CD8-positive, alpha-beta T cell (primary cell): ENCODE measurements at regions of chr1 and their contacts with region 1.

Region 1: DNA sequence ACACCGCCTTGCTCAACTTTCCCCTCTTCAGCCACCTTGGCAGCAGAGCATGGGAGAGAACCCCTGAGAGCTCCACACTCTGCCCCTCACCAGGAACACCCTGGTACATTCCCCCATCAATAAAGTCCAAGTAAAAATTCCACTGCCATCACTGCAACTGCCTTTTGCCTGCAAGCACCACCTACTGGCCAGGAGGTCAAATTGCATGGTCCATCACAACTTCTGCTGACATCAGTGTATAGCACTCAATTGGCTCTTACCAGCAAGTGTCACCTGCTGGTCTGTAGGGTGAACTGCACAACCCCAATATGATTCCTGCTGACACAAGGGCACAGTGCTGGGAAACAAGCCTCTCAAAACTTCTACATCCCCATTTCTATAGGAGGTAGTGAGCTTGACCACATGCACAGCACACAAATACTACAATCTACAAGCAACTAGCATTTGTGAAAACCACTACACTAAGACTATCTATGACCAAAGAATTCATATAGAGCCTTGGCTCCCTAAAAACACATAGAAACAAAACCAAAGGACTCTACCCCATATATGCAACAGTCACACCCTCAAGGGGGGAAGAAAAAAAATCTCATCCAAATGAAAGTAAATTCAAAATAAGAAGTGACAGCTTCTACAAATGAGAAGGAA is 69.2 kb downstream of the FASLG start:
- DNase-seq: peak in 4 of 9 experiments; percentile 25 to 77 (median 55)
- ATAC-seq: peak; percentile 99
- H3K4me3 ChIP-seq: no peak overlapping the region
- H3K4me3 Mint-ChIP-seq: no peak overlapping the region
- H3K27ac ChIP-seq: no peak overlapping the region
- H3K27ac Mint-ChIP-seq: no peak overlapping the region
- H3K4me1 ChIP-seq: no peaks in the 10 kb centered on the region
- H3K4me1 Mint-ChIP-seq: peaks cover 23% of the 10 kb centered on the region
- H3K27me3 ChIP-seq: no peaks in the 10 kb centered on the region
- H3K27me3 Mint-ChIP-seq: no peaks in the 10 kb centered on the region
- CTCF ChIP-seq: peak; percentile 57

Region 2: GRCh38 chr1:172180501-172181285 is 547.4 kb before region 1 on chr1:
- CTCF ChIA-PET with region 1: no interaction called
- POLR2A ChIA-PET with region 1: no interaction called
- intact Hi-C with region 1: loop called in 1 of 2 experiments (anchors 5 kb)
- DNase-seq: peak in 7 of 9 experiments; percentile 13 to 73 (median 44)
- ATAC-seq: peak; percentile 66
- H3K4me3 ChIP-seq: peak overlapping the region; percentile 17 to 37
- H3K4me3 Mint-ChIP-seq: peak overlapping the region; percentile 76
- H3K27ac ChIP-seq: peak overlapping the region; percentile 46 to 87
- H3K27ac Mint-ChIP-seq: peak overlapping the region; percentile 96
- H3K4me1 ChIP-seq: peaks cover 24% of the 10 kb centered on the region
- H3K4me1 Mint-ChIP-seq: peaks cover 37% of the 10 kb centered on the region
- H3K27me3 ChIP-seq: no peaks in the 10 kb centered on the region
- H3K27me3 Mint-ChIP-seq: no peaks in the 10 kb centered on the region
- CTCF ChIP-seq: no peak

Region 3: GRCh38 chr1:172449585-172450534 is 278.2 kb before region 1 on chr1:
- CTCF ChIA-PET with region 1: interaction called, 3 read pairs
- POLR2A ChIA-PET with region 1: no interaction called
- intact Hi-C with region 1: loop called (anchors 1 to 5 kb)
- DNase-seq: peak in 4 of 9 experiments; percentile 10 to 59 (median 40)
- ATAC-seq: peak; percentile 80
- H3K4me3 ChIP-seq: no peak overlapping the region
- H3K4me3 Mint-ChIP-seq: no peak overlapping the region
- H3K27ac ChIP-seq: no peak overlapping the region
- H3K27ac Mint-ChIP-seq: no peak overlapping the region
- H3K4me1 ChIP-seq: peaks cover 13% of the 10 kb centered on the region
- H3K4me1 Mint-ChIP-seq: peaks cover 12% of the 10 kb centered on the region
- H3K27me3 ChIP-seq: no peaks in the 10 kb centered on the region
- H3K27me3 Mint-ChIP-seq: no peaks in the 10 kb centered on the region
- CTCF ChIP-seq: peak; percentile 65

Region 4: GRCh38 chr1:172609528-172609927 is 118.6 kb before region 1 on chr1:
- CTCF ChIA-PET with region 1: interaction called, 141 read pairs
- POLR2A ChIA-PET with region 1: interaction called, 3 read pairs
- intact Hi-C with region 1: no loop called
- DNase-seq: peak in 2 of 9 experiments; percentile 53 to 62
- ATAC-seq: peak; percentile 78
- H3K4me3 ChIP-seq: no peak overlapping the region
- H3K4me3 Mint-ChIP-seq: no peak overlapping the region
- H3K27ac ChIP-seq: no peak overlapping the region
- H3K27ac Mint-ChIP-seq: no peak overlapping the region
- H3K4me1 ChIP-seq: no peaks in the 10 kb centered on the region
- H3K4me1 Mint-ChIP-seq: peaks cover 4% of the 10 kb centered on the region
- H3K27me3 ChIP-seq: no peaks in the 10 kb centered on the region
- H3K27me3 Mint-ChIP-seq: no peaks in the 10 kb centered on the region
- CTCF ChIP-seq: peak; percentile 74